ENCODE measurements at regions of chr1 and their contacts with region 1.

Region 1: DNA sequence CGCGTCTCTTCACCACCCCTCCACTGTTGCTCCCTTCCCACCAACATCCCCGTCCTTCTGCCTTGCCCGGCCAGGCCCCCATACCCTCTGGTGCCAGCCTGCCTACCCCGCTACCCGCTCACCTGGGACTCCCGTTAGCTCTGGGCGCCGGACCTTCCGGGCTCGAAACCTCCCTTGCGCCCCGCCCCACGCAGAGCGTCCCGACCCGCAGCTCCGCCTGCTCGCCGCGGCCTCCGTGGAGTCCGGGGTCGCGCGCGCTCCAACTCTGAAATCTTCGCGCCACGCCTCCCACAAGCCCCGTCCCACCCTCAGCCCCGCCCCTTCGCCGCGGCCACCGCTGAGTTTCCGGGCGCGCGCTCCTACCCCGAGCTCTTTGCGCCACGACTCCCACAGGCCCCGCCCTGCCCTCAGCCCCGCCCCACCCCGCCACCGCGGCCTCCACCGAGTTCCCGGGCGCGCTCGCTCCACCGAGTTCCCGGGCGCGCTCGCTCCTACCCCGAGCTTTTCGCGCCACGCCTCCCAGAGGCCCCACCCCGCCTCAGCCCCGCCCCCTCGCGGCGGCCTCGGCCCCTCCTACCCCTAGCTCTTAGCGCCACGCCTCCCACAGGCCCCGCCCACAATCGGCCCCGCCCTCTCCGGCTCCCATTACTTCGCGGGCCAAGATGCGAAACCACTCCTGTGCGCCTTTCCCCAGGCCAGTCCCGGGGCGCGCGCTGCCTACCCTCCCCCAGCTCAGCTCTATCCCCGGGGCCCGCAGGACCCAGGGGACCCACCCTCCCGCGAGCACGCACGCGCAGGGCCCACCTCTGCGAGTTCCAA is at the start of gene IFT25:
- DNase-seq: peak; percentile 99
- H3K4me3 Mint-ChIP-seq: peak within 1 kb of the TSS; percentile 92
- H3K27ac Mint-ChIP-seq: peak within 1 kb of the TSS; percentile 90
- H3K4me1 Mint-ChIP-seq: peaks cover 48% of the 10 kb centered on the region
- H3K27me3 Mint-ChIP-seq: no peaks in the 10 kb centered on the region
- total RNA-seq, gene IFT25: 52.5 to 60.3 TPM

Region 2: GRCh38 chr1:53326088-53326597 is 619.5 kb before region 1 on chr1:
- CTCF ChIA-PET with region 1: no interaction called
- POLR2A ChIA-PET with region 1: no interaction called
- intact Hi-C with region 1: loop called (anchors 5 kb)
- DNase-seq: peak; percentile 98
- H3K4me3 Mint-ChIP-seq: peak overlapping the region; percentile 95
- H3K27ac Mint-ChIP-seq: peak overlapping the region; percentile 97
- H3K4me1 Mint-ChIP-seq: peaks cover 23% of the 10 kb centered on the region
- H3K27me3 Mint-ChIP-seq: no peaks in the 10 kb centered on the region

Region 3: GRCh38 chr1:53860967-53861411 is 84.7 kb before region 1 on chr1:
- CTCF ChIA-PET with region 1: interaction called, 91 read pairs
- POLR2A ChIA-PET with region 1: interaction called, 9 read pairs
- intact Hi-C with region 1: loop called (anchors 1 kb)
- DNase-seq: peak; percentile 57
- H3K4me3 Mint-ChIP-seq: no peak overlapping the region
- H3K27ac Mint-ChIP-seq: no peak overlapping the region
- H3K4me1 Mint-ChIP-seq: peaks cover 12% of the 10 kb centered on the region
- H3K27me3 Mint-ChIP-seq: no peaks in the 10 kb centered on the region

Region 4: DNA sequence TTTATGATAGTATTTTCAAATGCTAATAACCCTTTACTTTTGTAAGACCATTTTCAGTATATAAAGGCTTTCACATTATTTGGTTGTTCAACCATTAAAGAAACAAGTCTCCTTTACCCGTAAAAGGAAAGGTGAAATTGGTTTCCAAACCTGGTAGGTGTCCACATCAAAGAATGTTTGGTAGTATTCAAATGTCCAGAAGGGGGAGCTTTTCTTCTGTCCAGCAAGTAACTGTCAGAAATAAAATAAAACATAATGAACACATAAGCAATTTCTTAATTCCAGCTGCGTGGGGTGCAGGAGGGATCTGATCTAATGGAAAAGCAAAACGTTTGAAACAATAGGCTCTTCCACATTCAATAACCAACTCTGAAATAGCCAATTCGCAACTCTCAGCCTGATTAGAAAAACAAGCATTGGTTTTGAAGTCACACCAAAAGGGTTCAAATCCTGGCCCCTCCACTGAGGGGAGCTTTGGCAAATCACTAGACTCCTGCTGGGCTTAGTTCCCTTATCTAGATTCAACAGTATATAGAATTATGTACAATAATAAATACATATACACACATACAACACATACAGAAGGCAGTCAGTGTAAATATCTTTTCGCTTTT is 67.0 kb before region 1 on chr1:
- CTCF ChIA-PET with region 1: interaction called, 76 read pairs
- POLR2A ChIA-PET with region 1: interaction called, 3 read pairs
- intact Hi-C with region 1: loop called (anchors 1 kb)
- DNase-seq: no peak
- H3K4me3 Mint-ChIP-seq: no peak overlapping the region
- H3K27ac Mint-ChIP-seq: no peak overlapping the region
- H3K4me1 Mint-ChIP-seq: no peaks in the 10 kb centered on the region
- H3K27me3 Mint-ChIP-seq: no peaks in the 10 kb centered on the region

Region 5: GRCh38 chr1:53919675-53920066 is 26.0 kb before region 1 on chr1:
- CTCF ChIA-PET with region 1: interaction called, 3 read pairs
- POLR2A ChIA-PET with region 1: interaction called, 6 read pairs
- intact Hi-C with region 1: loop called (anchors 2 kb)
- DNase-seq: peak; percentile 41
- H3K4me3 Mint-ChIP-seq: no peak overlapping the region
- H3K27ac Mint-ChIP-seq: peak overlapping the region; percentile 73
- H3K4me1 Mint-ChIP-seq: peaks cover 32% of the 10 kb centered on the region
- H3K27me3 Mint-ChIP-seq: no peaks in the 10 kb centered on the region

Region 6: GRCh38 chr1:54406339-54407153 is 460.9 kb after region 1 on chr1 and contains the start of gene SSBP3:
- CTCF ChIA-PET with region 1: no interaction called
- POLR2A ChIA-PET with region 1: no interaction called
- intact Hi-C with region 1: loop called (anchors 5 kb)
- DNase-seq: peak; percentile 93
- H3K4me3 Mint-ChIP-seq: peak within 1 kb of the TSS; percentile 84
- H3K27ac Mint-ChIP-seq: peak within 1 kb of the TSS; percentile 92
- H3K4me1 Mint-ChIP-seq: peaks cover 63% of the 10 kb centered on the region
- H3K27me3 Mint-ChIP-seq: no peaks in the 10 kb centered on the region
- total RNA-seq, gene SSBP3: 44.4 to 49.6 TPM

Measured in activated CD4-positive, alpha-beta memory T cell treated with anti-CD3 and anti-CD28 coated beads for 36 hours (primary cell).